Dorsolateral prefrontal cortex (tissue), 120 donors: ENCODE measurements at regions of chr6 and their contacts with region 1.

Region 1: GRCh38 chr6:3294921-3295871 is 36.4 kb downstream of the PSMG4 start:
- DNase-seq: peak in 8 of 10 donors; percentile 30 to 68 (median 58)
- H3K4me3 ChIP-seq: no peak overlapping the region
- H3K27ac ChIP-seq: peak overlapping the region in 51 of 59 donors; percentile 6 to 81 (median 57)
- H3K27me3 ChIP-seq: no peaks in the 10 kb centered on the region
- CTCF ChIP-seq: peak in 44 of 56 donors; percentile 21 to 65 (median 41)

Region 2: GRCh38 chr6:3351105-3351676 is 56.0 kb after region 1 on chr6:
- intact Hi-C with region 1: loop called in 1 of 2 experiments (anchors 5 kb)
- DNase-seq: no peak
- H3K4me3 ChIP-seq: peak overlapping the region in 6 of 59 donors; percentile 3 to 36 (median 23)
- H3K27ac ChIP-seq: peak overlapping the region; percentile 6 to 99 (median 82)
- H3K27me3 ChIP-seq: no peaks in the 10 kb centered on the region
- CTCF ChIP-seq: peak in 1 of 56 donors; percentile 14